Activated B cell treated with CpG ODN at 0.5 μM for 24 hours (primary cell): ENCODE measurements at regions of chr12 and their contacts with region 1.

Region 1: GRCh38 chr12:49322708-49323523 is at the start of gene TROAP:
- DNase-seq: peak; percentile 85
- ATAC-seq: peak; percentile 99
- H3K4me3 Mint-ChIP-seq: peak within 1 kb of the TSS; percentile 94
- H3K27ac Mint-ChIP-seq: peak within 1 kb of the TSS; percentile 73
- H3K4me1 Mint-ChIP-seq: peaks cover 18% of the 10 kb centered on the region
- H3K27me3 Mint-ChIP-seq: no peaks in the 10 kb centered on the region
- CTCF ChIP-seq: no peak
- total RNA-seq, gene TROAP: 2.0 and 3.1 TPM in 2 replicates

Region 2: DNA sequence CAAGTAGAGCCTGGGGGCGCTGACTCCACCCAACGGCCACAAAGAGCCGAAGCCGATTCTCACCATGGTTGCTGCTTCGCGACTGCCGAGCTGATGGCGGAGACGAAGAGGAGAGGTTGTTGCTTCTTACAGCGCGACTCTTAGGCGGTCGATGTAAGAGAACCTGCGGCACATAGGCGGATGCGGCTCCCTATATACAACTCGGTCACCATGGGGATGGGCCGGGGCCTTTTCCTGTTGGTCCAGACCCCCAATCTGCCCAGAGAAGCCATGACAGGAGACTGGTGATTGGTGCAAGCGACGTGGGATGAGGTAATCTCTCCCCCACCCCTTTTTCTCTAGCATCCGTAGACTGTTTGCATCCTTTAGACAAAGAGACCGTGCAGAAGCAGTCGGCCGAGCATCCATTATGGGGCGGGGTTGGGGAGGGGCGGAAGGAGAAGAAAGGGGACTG is 134.0 kb before region 1 on chr12 and contains the start of gene TUBA1A:
- CTCF ChIA-PET with region 1: no interaction called
- POLR2A ChIA-PET with region 1: no interaction called
- intact Hi-C with region 1: no loop called
- DNase-seq: peak; percentile 83
- ATAC-seq: peak; percentile 86
- H3K4me3 Mint-ChIP-seq: peak within 1 kb of the TSS; percentile 97
- H3K27ac Mint-ChIP-seq: peak within 1 kb of the TSS; percentile 99
- H3K4me1 Mint-ChIP-seq: peaks cover 20% of the 10 kb centered on the region
- H3K27me3 Mint-ChIP-seq: no peaks in the 10 kb centered on the region
- CTCF ChIP-seq: no peak
- total RNA-seq, gene TUBA1A: 114 and 115 TPM in 2 replicates

Region 3: DNA sequence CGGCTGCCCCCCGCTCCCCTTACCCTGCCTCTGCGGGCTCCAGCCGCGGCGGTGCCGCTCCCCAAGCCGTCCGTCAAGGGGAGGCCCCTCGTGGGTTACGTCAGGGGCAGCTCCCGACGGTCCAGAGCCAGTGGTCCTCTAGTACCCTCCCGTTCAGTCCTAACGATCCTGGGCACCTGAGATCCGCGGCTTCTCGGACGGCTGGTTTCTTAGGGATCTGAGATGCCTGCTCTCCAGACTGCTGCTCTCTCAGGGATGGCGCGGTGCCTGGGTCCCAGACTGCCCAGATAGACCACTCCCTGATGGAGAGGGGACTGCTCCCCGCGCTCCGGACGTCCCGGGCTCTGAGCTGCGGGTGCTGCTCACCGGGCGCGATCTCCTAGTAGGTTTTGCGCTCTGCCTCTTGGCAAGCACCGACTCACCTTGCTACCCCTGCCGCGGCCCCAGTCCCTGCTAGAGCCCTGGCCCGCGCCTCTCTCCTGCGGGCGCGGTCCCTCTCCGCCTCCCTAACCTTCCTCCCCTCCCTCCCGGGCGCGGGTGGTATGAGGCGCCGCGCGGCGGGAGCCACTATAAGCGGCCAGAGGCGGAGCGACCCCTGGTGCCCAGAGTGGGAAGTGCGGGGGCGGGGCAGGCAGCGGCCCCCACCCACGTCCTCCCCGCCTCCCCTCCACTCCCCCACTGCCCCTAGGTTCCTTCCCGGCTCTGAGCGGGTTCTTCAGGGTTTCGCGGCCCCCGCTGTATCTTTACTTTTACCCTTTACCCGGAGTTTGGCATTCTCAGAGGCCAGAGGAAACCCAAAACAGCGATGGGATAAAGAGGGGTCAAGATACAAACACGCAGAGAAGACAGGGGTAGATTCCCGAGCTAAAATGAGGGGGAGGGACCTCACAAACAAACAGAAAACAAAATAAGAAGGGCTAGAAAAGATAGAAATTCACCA is 14.0 kb after region 1 on chr12 and contains the start of gene C1QL4:
- CTCF ChIA-PET with region 1: interaction called, 9 read pairs
- POLR2A ChIA-PET with region 1: interaction called, 10 read pairs
- intact Hi-C with region 1: loop called (anchors 1 kb)
- DNase-seq: peak; percentile 95
- ATAC-seq: peak; percentile 97
- H3K4me3 Mint-ChIP-seq: peak within 1 kb of the TSS; percentile 73
- H3K27ac Mint-ChIP-seq: no peak within 1 kb of the TSS
- H3K4me1 Mint-ChIP-seq: peaks cover 31% of the 10 kb centered on the region
- H3K27me3 Mint-ChIP-seq: peaks cover 49% of the 10 kb centered on the region
- CTCF ChIP-seq: no peak
- total RNA-seq, gene C1QL4: not detected in 2 replicates

Region 4: GRCh38 chr12:49403971-49404450 is 81.1 kb after region 1 on chr12:
- CTCF ChIA-PET with region 1: no interaction called
- POLR2A ChIA-PET with region 1: no interaction called
- intact Hi-C with region 1: no loop called
- DNase-seq: no peak
- ATAC-seq: no peak
- H3K4me3 Mint-ChIP-seq: no peak overlapping the region
- H3K27ac Mint-ChIP-seq: no peak overlapping the region
- H3K4me1 Mint-ChIP-seq: no peaks in the 10 kb centered on the region
- H3K27me3 Mint-ChIP-seq: no peaks in the 10 kb centered on the region
- CTCF ChIP-seq: no peak

Region 5: GRCh38 chr12:49515266-49515665 is 192.3 kb after region 1 on chr12:
- CTCF ChIA-PET with region 1: no interaction called
- POLR2A ChIA-PET with region 1: no interaction called
- intact Hi-C with region 1: no loop called
- DNase-seq: no peak
- ATAC-seq: no peak
- H3K4me3 Mint-ChIP-seq: no peak overlapping the region
- H3K27ac Mint-ChIP-seq: no peak overlapping the region
- H3K4me1 Mint-ChIP-seq: no peaks in the 10 kb centered on the region
- H3K27me3 Mint-ChIP-seq: no peaks in the 10 kb centered on the region
- CTCF ChIP-seq: no peak

Region 6: GRCh38 chr12:50103767-50104321 is 780.9 kb after region 1 on chr12 and contains the start of gene GPD1:
- CTCF ChIA-PET with region 1: no interaction called
- POLR2A ChIA-PET with region 1: no interaction called
- intact Hi-C with region 1: no loop called
- DNase-seq: no peak
- ATAC-seq: no peak
- H3K4me3 Mint-ChIP-seq: no peak within 1 kb of the TSS
- H3K27ac Mint-ChIP-seq: no peak within 1 kb of the TSS
- H3K4me1 Mint-ChIP-seq: peaks cover 16% of the 10 kb centered on the region
- H3K27me3 Mint-ChIP-seq: no peaks in the 10 kb centered on the region
- CTCF ChIP-seq: no peak
- total RNA-seq, gene GPD1: 0.46 and 0.60 TPM in 2 replicates